Endothelial cell of umbilical vein (primary cell): ENCODE measurements at regions of chr21 and their contacts with region 1.

Region 1: GRCh38 chr21:42892931-42893755 is at the start of gene NDUFV3:
- DNase-seq: peak; percentile 99
- H3K4me3 ChIP-seq: peak within 1 kb of the TSS; percentile 42 to 77 (median 71)
- H3K27ac ChIP-seq: peak within 1 kb of the TSS; percentile 36
- H3K4me1 ChIP-seq: peaks cover 5% of the 10 kb centered on the region
- H3K27me3 ChIP-seq: no peaks in the 10 kb centered on the region
- CTCF ChIP-seq: no peak
- POLR2A ChIP-seq: peak; percentile 93
- total RNA-seq, gene NDUFV3: 40.6 and 45.7 TPM in 2 replicates

Region 2: DNA sequence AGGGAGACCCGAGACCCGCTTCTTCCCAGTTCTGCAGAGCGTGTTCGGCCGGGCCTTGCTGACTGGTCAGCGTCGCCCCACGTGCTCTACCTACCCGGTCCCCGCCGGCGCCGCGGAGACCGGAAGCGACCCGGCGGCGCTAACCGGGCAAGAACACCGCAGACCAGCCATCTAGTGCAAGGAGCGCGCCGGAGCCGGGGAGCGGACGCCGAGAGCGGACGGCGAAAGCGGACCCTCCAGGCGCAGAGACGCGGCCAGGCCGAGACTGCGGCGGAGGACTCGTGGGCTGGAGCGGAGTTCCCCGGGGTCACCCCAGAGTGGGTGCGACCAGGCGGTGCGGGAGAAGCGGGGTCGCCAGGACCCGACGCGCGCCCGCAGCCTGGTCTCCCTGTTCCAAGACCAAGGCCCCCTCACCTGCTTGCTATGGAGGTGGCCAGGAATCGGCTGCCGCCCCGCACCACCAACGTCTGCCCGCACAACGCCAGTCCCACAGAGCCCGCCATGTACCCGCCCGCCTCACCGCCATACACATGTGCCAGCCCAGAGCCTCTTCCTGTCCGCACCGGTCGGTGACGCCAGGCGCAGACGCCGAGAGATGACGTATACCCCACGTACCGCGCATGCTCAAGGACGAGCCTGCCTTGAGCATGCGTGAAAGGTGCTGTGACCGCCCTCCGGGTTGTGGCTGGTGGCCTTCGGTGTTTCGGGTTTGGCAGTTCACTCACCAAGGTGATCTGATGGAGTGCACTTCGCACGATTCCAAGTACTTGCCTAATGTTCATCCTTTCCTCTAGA is 14.0 kb before region 1 on chr21 and contains the start of gene WDR4:
- CTCF ChIA-PET with region 1: interaction called, 3 read pairs
- POLR2A ChIA-PET with region 1: no interaction called
- dilution Hi-C with region 1: no loop called
- intact Hi-C with region 1: loop called (anchors 1 kb)
- DNase-seq: peak; percentile 99
- H3K4me3 ChIP-seq: peak within 1 kb of the TSS; percentile 20 to 69 (median 64)
- H3K27ac ChIP-seq: peak within 1 kb of the TSS; percentile 77
- H3K4me1 ChIP-seq: peaks cover 10% of the 10 kb centered on the region
- H3K27me3 ChIP-seq: no peaks in the 10 kb centered on the region
- CTCF ChIP-seq: no peak
- POLR2A ChIP-seq: peak; percentile 96
- total RNA-seq, gene WDR4: 30.4 and 40.0 TPM in 2 replicates

Region 3: GRCh38 chr21:42923541-42924432 is 30.6 kb after region 1 on chr21:
- CTCF ChIA-PET with region 1: no interaction called
- POLR2A ChIA-PET with region 1: no interaction called
- dilution Hi-C with region 1: no loop called
- intact Hi-C with region 1: loop called (anchors 1 kb)
- DNase-seq: peak; percentile 78
- H3K4me3 ChIP-seq: no peak overlapping the region
- H3K27ac ChIP-seq: peak overlapping the region; percentile 31
- H3K4me1 ChIP-seq: peaks cover 5% of the 10 kb centered on the region
- H3K27me3 ChIP-seq: peaks cover 0 to 3% of the 10 kb centered on the region in 2 experiments
- CTCF ChIP-seq: peak; percentile 76 to 77
- POLR2A ChIP-seq: no peak

Region 4: DNA sequence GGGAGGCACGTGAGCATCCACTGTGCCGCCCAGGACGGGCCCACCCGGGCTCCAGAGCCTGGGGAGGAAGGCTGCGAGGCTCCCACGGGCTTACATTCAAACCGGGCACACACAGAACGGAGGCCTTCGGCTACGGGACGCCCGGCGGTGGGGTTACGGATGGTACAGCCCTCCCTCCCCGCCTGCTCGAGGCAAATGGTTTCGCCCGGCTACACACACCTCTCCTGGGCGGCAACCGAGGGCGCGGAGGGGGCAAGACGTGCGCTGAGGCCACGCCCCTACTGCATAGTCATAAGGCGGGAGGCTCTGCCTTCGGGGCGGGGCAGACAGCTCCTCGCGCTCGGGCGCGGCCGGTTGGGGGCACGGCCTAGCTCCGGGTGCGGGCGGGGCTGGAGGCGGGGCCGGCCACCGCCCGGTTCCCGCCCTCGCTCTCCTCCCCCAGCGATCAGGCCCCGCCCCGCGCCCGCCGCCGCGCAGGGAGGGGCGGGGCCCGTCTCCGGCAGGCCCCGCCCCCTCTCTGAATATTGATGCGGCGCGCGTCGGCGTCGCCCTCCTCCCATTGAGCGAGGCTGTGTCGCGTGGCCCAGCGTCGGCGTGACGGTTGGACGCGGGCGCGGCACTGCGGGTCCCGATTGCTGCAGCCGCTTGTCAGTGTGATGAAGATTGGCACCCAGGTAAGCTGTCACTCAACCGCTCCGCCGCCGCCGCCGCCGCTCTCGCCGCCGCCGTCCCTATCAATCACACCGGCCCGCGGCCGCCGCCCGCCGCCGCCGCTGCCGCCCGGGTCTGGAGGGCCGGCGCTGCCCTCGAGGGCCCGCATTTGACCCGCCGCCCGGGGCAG is 81.1 kb after region 1 on chr21 and contains the start of gene PKNOX1:
- CTCF ChIA-PET with region 1: interaction called, 3 read pairs
- POLR2A ChIA-PET with region 1: interaction called, 3 read pairs
- dilution Hi-C with region 1: no loop called
- intact Hi-C with region 1: loop called (anchors 10 kb)
- DNase-seq: peak; percentile 98
- H3K4me3 ChIP-seq: peak within 1 kb of the TSS; percentile 33 to 78 (median 59)
- H3K27ac ChIP-seq: peak within 1 kb of the TSS; percentile 84
- H3K4me1 ChIP-seq: peaks cover 10% of the 10 kb centered on the region
- H3K27me3 ChIP-seq: no peaks in the 10 kb centered on the region
- CTCF ChIP-seq: peak in 1 of 2 donors; percentile 5
- POLR2A ChIP-seq: no peak
- total RNA-seq, gene PKNOX1: 16.6 and 19.3 TPM in 2 replicates